ENCODE measurements at regions of chr3 and their contacts with region 1.

Region 1: GRCh38 chr3:18758047-18758704 is 333.0 kb upstream of the SATB1 start:
- H3K4me3 ChIP-seq: no peak overlapping the region
- H3K27ac ChIP-seq: no peak overlapping the region
- H3K4me1 ChIP-seq: no peaks in the 10 kb centered on the region
- CTCF ChIP-seq: no peak

Region 2: DNA sequence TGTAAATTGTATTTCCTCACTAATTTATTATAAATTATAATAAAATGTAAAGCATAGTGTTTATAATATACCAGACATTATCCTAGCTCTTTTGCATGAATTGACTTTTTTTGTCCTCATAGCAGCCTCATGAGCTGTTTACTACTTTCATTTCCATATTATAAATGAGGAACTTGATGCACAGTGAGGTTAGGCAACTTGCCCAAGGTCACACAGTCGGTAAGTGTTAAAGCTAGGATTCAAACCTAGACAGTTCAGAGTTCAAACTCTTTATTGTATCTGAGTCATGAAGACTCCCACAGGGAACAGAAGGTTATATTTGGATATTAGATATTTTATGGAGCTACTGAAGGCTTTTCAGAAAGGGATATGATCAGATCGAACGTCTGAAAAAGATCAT is 10.8 kb before region 1 on chr3:
- CTCF ChIA-PET with region 1: interaction called, 12 read pairs
- POLR2A ChIA-PET with region 1: no interaction called
- H3K4me3 ChIP-seq: no peak overlapping the region
- H3K27ac ChIP-seq: no peak overlapping the region
- H3K4me1 ChIP-seq: no peaks in the 10 kb centered on the region
- CTCF ChIP-seq: no peak

Region 3: GRCh38 chr3:19046440-19046839 is 288.3 kb after region 1 on chr3:
- CTCF ChIA-PET with region 1: no interaction called
- POLR2A ChIA-PET with region 1: no interaction called
- H3K4me3 ChIP-seq: no peak overlapping the region
- H3K27ac ChIP-seq: no peak overlapping the region
- H3K4me1 ChIP-seq: no peaks in the 10 kb centered on the region
- CTCF ChIP-seq: no peak

Measured in HEK293 (cell line).